Right cardiac atrium (tissue), 5 donors: ENCODE measurements at regions of chr7 and their contacts with region 1.

Region 1: DNA sequence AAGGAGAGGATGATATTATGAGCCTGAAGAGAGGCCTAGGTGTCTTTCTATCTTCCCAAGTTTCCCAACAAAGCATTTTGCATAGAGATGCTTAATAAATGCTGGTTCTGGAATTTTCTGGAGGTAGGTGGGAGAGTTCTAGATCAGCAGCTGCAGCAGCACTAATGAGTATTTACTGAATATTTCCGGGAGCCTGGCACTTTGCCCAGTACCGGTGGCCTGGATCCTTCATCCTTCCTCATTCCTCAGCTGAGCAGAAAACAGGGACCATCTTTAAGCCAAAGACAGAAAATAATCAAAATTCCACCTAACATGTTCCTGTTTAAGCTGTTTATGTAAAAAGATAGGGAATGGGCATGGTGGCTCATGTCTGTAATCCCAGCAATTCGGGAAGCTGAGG is 813.2 kb upstream of the AUTS2 start:
- DNase-seq: no peak
- ATAC-seq: no peak
- H3K4me3 ChIP-seq: no peak overlapping the region
- H3K27ac ChIP-seq: no peak overlapping the region
- H3K4me1 ChIP-seq: no peaks in the 10 kb centered on the region
- H3K27me3 ChIP-seq: no peaks in the 10 kb centered on the region

Region 2: GRCh38 chr7:68720697-68721096 is 64.3 kb before region 1 on chr7:
- intact Hi-C with region 1: loop called in 1 of 4 experiments (anchors 10 kb)
- DNase-seq: no peak
- ATAC-seq: no peak
- H3K4me3 ChIP-seq: no peak overlapping the region
- H3K27ac ChIP-seq: no peak overlapping the region
- H3K4me1 ChIP-seq: no peaks in the 10 kb centered on the region
- H3K27me3 ChIP-seq: no peaks in the 10 kb centered on the region